ENCODE measurements at regions of chr10 and their contacts with region 1.

Region 1: GRCh38 chr10:133329491-133330202 is 7.0 kb downstream of the CALY start:
- DNase-seq: peak; percentile 90
- H3K4me3 ChIP-seq: peak overlapping the region; percentile 2 to 37; a peak in 2 of 4 replicates
- H3K27ac ChIP-seq: no peak overlapping the region
- H3K4me1 ChIP-seq: peaks cover 7 to 28% of the 10 kb centered on the region in 2 experiments; a peak in 2 of 4 replicates
- H3K27me3 ChIP-seq: peaks cover 27% of the 10 kb centered on the region
- CTCF ChIP-seq: peak; percentile 92
- EP300 ChIP-seq: no peak
- RAD21 ChIP-seq: peak; percentile 87

Region 2: GRCh38 chr10:133230387-133231195 is 99.1 kb before region 1 on chr10:
- CTCF ChIA-PET with region 1: no interaction called
- POLR2A ChIA-PET with region 1: no interaction called
- DNase-seq: no peak
- H3K4me3 ChIP-seq: no peak overlapping the region
- H3K27ac ChIP-seq: no peak overlapping the region
- H3K4me1 ChIP-seq: no peaks in the 10 kb centered on the region
- H3K27me3 ChIP-seq: peaks cover 57% of the 10 kb centered on the region
- CTCF ChIP-seq: no peak
- EP300 ChIP-seq: no peak
- RAD21 ChIP-seq: no peak

Region 3: DNA sequence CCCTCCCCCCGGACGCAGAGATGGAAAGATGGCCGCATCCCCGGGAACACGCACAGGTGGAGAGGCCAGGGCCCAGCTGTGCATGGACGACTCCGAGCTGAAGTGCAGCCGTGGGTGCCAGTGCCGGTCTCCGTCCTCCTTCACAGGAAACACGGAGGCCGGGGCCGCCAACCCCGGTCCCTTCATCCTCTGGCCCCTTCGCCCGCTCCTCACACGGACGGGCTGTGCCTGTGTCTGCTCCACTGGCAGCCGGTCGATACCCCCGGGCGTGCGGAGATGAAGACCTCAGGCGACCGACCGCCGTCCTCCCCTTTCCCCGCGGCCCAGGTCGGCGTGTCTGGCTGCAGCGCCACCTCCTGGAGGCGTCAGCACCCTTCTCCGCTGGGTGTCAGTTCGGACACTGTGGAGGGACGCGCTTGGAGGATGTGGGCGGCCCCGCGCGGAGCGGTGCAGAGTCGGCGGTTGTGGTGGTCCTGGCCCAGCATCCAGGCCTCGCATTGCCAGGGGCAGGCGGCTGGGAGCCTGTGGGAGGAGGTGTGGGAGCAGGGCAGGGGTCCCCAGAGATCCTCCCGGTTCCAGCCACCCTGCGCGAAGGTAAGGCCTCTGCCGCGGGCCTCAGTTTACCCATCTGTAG is 11.0 kb before region 1 on chr10:
- CTCF ChIA-PET with region 1: interaction called, 25 read pairs
- POLR2A ChIA-PET with region 1: interaction called, 3 read pairs
- DNase-seq: peak; percentile 88
- H3K4me3 ChIP-seq: peak overlapping the region; percentile 61 to 68
- H3K27ac ChIP-seq: peak overlapping the region in 1 of 2 experiments; percentile 86; a peak in 1 of 4 replicates
- H3K4me1 ChIP-seq: peaks cover 0 to 12% of the 10 kb centered on the region in 2 experiments; a peak in 1 of 4 replicates
- H3K27me3 ChIP-seq: no peaks in the 10 kb centered on the region
- CTCF ChIP-seq: peak; percentile 76
- EP300 ChIP-seq: no peak
- RAD21 ChIP-seq: peak; percentile 53

Region 4: GRCh38 chr10:133347710-133348517 is 18.3 kb after region 1 on chr10:
- CTCF ChIA-PET with region 1: interaction called, 21 read pairs
- POLR2A ChIA-PET with region 1: interaction called, 4 read pairs
- DNase-seq: peak; percentile 61
- H3K4me3 ChIP-seq: no peak overlapping the region
- H3K27ac ChIP-seq: no peak overlapping the region
- H3K4me1 ChIP-seq: peaks cover 0 to 11% of the 10 kb centered on the region in 2 experiments; a peak in 1 of 4 replicates
- H3K27me3 ChIP-seq: peaks cover 26% of the 10 kb centered on the region; the same call in 1 of the 2 replicates
- CTCF ChIP-seq: no peak
- EP300 ChIP-seq: no peak
- RAD21 ChIP-seq: no peak

Region 5: GRCh38 chr10:133378251-133379096 is 48.8 kb after region 1 on chr10:
- CTCF ChIA-PET with region 1: interaction called, 13 read pairs
- POLR2A ChIA-PET with region 1: interaction called, 4 read pairs
- DNase-seq: peak; percentile 82
- H3K4me3 ChIP-seq: peak overlapping the region; percentile 74 to 76
- H3K27ac ChIP-seq: peak overlapping the region in 1 of 2 experiments; percentile 67; a peak in 1 of 4 replicates
- H3K4me1 ChIP-seq: peaks cover 0 to 19% of the 10 kb centered on the region in 2 experiments; a peak in 2 of 4 replicates
- H3K27me3 ChIP-seq: no peaks in the 10 kb centered on the region
- CTCF ChIP-seq: no peak
- EP300 ChIP-seq: no peak
- RAD21 ChIP-seq: no peak

Region 6: DNA sequence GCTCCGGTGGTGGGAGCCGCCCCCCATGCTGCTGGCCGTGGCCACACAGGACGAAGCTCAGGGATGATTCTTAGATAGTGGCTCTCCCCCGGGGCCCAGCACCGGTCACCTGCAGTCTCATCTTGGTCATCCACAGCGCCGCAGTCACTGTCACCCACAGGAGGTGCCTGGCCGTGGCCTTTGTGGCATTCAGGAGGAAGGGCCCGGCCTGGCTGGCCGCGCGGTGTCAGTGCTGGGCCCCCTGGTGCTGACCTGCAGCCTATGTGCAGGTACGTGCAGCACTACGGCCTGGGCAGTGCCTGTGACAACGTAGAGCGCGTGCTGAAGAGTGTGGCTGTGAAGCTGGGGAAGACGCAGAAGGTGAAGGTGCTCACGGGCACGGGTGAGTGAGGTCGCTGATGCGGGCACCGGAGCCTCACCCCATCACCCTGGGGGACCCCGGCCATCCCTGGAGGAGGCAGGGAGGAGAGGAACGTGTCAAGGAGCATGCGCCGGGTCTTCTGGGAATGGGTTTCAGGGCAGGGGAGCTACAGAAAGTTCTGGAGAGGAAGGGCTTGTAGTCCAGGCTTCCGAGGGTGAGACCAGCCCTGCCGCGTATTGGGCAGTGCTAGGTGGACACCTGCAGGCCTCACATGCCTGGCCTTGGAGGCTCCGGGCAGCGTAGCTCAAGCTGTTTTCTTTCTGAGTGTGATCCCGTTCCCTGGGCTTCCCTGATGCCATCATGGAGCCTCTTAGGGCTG is 89.7 kb after region 1 on chr10:
- CTCF ChIA-PET with region 1: interaction called, 10 read pairs
- POLR2A ChIA-PET with region 1: no interaction called
- DNase-seq: no peak
- H3K4me3 ChIP-seq: no peak overlapping the region
- H3K27ac ChIP-seq: no peak overlapping the region
- H3K4me1 ChIP-seq: no peaks in the 10 kb centered on the region; a peak in 1 of 4 replicates
- H3K27me3 ChIP-seq: no peaks in the 10 kb centered on the region
- CTCF ChIP-seq: no peak
- EP300 ChIP-seq: no peak
- RAD21 ChIP-seq: no peak

Region 7: GRCh38 chr10:133608855-133609254 is 279.2 kb after region 1 on chr10:
- CTCF ChIA-PET with region 1: interaction called, 12 read pairs
- POLR2A ChIA-PET with region 1: no interaction called
- DNase-seq: peak; percentile 38
- H3K4me3 ChIP-seq: no peak overlapping the region
- H3K27ac ChIP-seq: no peak overlapping the region
- H3K4me1 ChIP-seq: no peaks in the 10 kb centered on the region
- H3K27me3 ChIP-seq: peaks cover 18% of the 10 kb centered on the region; the same call in 1 of the 2 replicates
- CTCF ChIP-seq: peak; percentile 61
- EP300 ChIP-seq: no peak
- RAD21 ChIP-seq: peak; percentile 56